GM12878 (cell line): ENCODE measurements at regions of chr5 and their contacts with region 1.

Region 1: GRCh38 chr5:116613445-116613844 is 38.8 kb upstream of the SEMA6A start:
- DNase-seq: no peak
- ATAC-seq: peak; percentile 87
- H3K4me3 ChIP-seq: no peak overlapping the region
- H3K27ac ChIP-seq: peak overlapping the region; percentile 69; the same call in 1 of the 2 replicates
- H3K4me1 ChIP-seq: peaks cover 17% of the 10 kb centered on the region
- H3K27me3 ChIP-seq: no peaks in the 10 kb centered on the region
- CTCF ChIP-seq: no peak
- EP300 ChIP-seq: no peak
- POLR2A ChIP-seq: no peak
- RAD21 ChIP-seq: no peak

Region 2: GRCh38 chr5:116583085-116583861 is 30.2 kb before region 1 on chr5:
- CTCF ChIA-PET with region 1: interaction called, 6 read pairs
- POLR2A ChIA-PET with region 1: interaction called, 4 read pairs
- RAD21 ChIA-PET with region 1: interaction called, 89 read pairs
- SMC1A ChIA-PET with region 1: interaction called, 74 read pairs
- in situ Hi-C with region 1: no loop called
- intact Hi-C with region 1: no loop called
- DNase-seq: no peak
- ATAC-seq: peak; percentile 76
- H3K4me3 ChIP-seq: no peak overlapping the region
- H3K27ac ChIP-seq: no peak overlapping the region
- H3K4me1 ChIP-seq: no peaks in the 10 kb centered on the region
- H3K27me3 ChIP-seq: no peaks in the 10 kb centered on the region
- CTCF ChIP-seq: no peak
- EP300 ChIP-seq: no peak
- POLR2A ChIP-seq: no peak
- RAD21 ChIP-seq: no peak

Region 3: DNA sequence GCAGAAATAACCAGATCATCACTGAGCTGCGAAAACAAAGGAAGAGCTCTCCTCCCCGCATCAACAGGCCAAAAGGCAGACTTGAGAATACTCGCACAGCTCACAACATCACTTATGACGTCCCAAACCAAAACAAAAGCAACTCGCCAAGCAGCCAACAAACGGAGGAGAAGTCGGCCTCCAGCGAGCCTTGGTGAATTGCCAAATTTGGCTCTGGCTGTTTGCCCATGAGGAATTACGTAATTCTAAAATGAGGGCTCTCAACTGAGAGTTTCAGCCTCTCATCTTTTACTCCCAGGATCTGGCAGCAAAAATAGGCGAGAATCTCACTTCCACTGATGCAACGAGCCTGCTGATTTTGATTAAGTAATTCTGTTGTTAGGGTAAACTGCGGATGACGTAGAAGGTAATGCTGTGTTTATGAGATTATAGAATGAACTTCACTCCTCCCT is 12.9 kb after region 1 on chr5:
- CTCF ChIA-PET with region 1: interaction called, 11 read pairs
- POLR2A ChIA-PET with region 1: interaction called, 40 read pairs
- RAD21 ChIA-PET with region 1: interaction called, 11 read pairs
- SMC1A ChIA-PET with region 1: interaction called, 67 read pairs
- in situ Hi-C with region 1: no loop called
- intact Hi-C with region 1: no loop called
- DNase-seq: no peak
- ATAC-seq: no peak
- H3K4me3 ChIP-seq: no peak overlapping the region
- H3K27ac ChIP-seq: no peak overlapping the region
- H3K4me1 ChIP-seq: peaks cover 6% of the 10 kb centered on the region
- H3K27me3 ChIP-seq: no peaks in the 10 kb centered on the region
- CTCF ChIP-seq: no peak
- EP300 ChIP-seq: no peak
- POLR2A ChIP-seq: no peak
- RAD21 ChIP-seq: no peak

Region 4: DNA sequence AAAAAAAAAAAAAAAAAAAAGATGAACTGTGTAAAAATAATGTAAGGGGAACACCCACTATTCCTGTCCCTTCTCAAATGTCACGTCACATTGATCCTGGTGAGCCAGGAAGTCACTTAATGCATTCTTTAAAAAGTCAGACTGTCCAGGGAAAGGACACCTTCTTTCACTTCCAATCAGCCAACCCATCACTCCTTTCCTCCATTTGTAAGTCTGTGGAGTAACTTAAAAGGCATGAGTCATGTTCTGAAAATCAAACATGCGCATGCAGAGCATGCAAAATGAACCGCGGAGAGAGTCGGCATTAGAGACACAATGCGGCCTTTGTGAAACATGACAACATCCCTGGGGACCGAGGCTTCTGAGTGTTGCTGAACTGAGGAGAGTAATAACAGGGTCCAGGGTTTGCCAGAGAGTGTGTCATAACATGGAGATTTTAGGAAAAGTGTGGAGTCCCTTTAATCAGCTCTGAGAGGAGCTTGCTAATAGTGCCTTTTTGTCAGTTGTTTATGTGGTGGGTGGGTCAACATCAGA is 38.8 kb after region 1 on chr5:
- CTCF ChIA-PET with region 1: interaction called, 3 read pairs
- POLR2A ChIA-PET with region 1: interaction called, 8 read pairs
- RAD21 ChIA-PET with region 1: interaction called, 67 read pairs
- SMC1A ChIA-PET with region 1: interaction called, 61 read pairs
- in situ Hi-C with region 1: no loop called
- intact Hi-C with region 1: loop called (anchors 2 kb)
- DNase-seq: peak; percentile 85
- ATAC-seq: peak; percentile 96
- H3K4me3 ChIP-seq: no peak overlapping the region
- H3K27ac ChIP-seq: no peak overlapping the region; the same call in 1 of the 2 replicates
- H3K4me1 ChIP-seq: peaks cover 12% of the 10 kb centered on the region
- H3K27me3 ChIP-seq: no peaks in the 10 kb centered on the region
- CTCF ChIP-seq: no peak
- EP300 ChIP-seq: peak; percentile 81 to 90; a peak in 3 of 4 replicates
- POLR2A ChIP-seq: no peak
- RAD21 ChIP-seq: no peak

Region 5: DNA sequence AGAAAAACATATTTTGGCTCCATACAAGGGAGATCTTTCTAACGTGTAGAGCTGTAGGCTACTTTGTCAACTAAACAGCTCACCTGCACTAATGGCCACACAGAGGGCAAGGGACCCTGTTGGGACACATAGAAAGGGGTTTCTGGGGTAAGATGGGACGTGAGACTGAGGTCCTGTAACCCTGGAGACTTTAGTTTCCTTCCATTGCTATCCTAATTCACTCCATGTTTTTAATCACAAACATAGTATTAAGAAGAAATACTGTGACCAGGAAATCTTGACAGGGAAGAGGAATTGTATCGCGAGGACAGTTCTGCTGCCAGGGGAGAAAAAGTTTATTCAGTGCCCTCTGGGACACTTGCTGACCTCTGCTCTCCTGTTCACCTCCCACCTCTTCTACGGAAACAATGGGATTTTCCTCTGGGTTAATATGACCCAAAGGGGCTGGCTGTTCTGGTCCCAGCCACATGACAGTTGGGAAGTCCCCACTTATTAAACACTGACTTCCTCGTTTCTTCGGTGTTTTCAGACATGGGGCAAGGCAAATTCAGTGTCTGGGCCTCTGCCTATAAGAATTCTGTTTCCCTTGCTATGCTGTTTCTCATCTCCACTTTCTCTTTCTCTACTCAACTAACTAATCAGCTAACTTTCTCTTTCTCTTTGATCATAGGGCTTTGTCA is 68.0 kb after region 1 on chr5:
- CTCF ChIA-PET with region 1: no interaction called
- POLR2A ChIA-PET with region 1: no interaction called
- RAD21 ChIA-PET with region 1: interaction called, 16 read pairs
- SMC1A ChIA-PET with region 1: interaction called, 12 read pairs
- in situ Hi-C with region 1: no loop called
- intact Hi-C with region 1: no loop called
- DNase-seq: peak; percentile 86
- ATAC-seq: peak; percentile 98
- H3K4me3 ChIP-seq: 0 out of 2 replicates have a peak overlapping the region, but pooled peaks have one; percentile 14
- H3K27ac ChIP-seq: peak overlapping the region; percentile 84
- H3K4me1 ChIP-seq: peaks cover 20% of the 10 kb centered on the region
- H3K27me3 ChIP-seq: no peaks in the 10 kb centered on the region
- CTCF ChIP-seq: no peak
- EP300 ChIP-seq: peak; percentile 48 to 65; a peak in 2 of 4 replicates
- POLR2A ChIP-seq: 0 out of 2 replicates have a peak, but pooled peaks have one; percentile 33
- RAD21 ChIP-seq: no peak